Prostate gland (tissue), 2 donors: ENCODE measurements at regions of chr12 and their contacts with region 1.

Region 1: DNA sequence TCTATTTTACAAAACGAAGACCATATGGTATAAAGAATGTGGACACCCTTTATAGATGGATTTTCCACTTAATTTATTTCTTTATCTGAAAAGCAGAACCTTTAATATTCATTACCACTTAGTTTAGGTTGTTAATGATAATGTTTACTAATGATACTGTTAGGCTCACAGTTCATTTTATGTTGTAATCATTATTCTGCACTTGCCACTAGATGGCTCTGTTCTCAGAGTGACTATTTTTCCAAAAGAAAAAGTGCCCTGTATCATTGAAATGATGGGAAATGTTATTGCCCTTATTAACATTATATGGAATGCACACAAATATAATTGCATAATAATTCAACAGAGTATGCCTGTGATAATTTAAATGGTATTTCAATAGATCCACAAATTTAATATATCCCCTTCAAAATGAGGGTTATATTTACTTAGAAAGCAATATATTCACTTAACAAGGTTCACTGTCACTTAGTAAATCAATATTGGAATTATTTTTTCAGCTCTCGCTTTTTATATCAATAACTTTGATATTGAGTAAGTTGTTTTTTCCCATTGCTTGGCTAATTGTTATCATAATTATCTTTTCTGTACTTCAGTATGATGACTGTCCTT is 95.7 kb downstream of the PDE3A start:
- DNase-seq: no peak
- H3K4me3 ChIP-seq: no peak overlapping the region
- H3K27ac ChIP-seq: no peak overlapping the region
- H3K4me1 ChIP-seq: no peaks in the 10 kb centered on the region
- H3K27me3 ChIP-seq: no peaks in the 10 kb centered on the region
- CTCF ChIP-seq: peak in 3 of 4 experiments; percentile 38 to 57 (median 48)
- POLR2A ChIP-seq: no peak

Region 2: DNA sequence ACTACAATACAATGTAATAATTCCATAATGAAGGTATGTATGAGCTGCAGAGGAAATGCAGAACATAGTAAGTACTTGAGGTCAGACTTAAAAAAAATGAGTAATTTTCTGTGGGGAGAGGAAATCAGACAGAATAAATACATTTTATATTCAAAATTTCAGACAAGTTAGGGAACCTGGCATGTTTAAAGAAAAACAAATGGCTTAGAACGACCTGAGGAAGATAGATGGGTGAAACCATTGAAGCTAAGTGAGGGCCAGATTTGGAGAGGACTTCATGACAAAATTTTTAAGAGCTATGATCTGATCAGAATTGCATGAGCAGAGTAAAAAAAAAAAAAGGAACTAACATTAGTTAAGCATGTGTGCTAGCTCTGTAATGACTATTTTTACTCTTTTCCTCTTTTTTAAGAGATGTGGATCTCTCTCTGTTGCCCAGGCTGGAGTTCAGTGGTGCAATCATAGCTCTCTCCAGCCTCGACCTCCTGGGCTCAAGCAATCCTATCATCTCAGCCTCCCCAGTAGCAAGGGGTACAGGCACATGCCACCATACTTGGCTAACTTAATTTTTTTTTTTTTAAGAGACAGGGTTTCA is 253.3 kb before region 1 on chr12:
- intact Hi-C with region 1: no loop called
- DNase-seq: no peak
- H3K4me3 ChIP-seq: no peak overlapping the region
- H3K27ac ChIP-seq: peak overlapping the region in 1 of 2 donors; percentile 24
- H3K4me1 ChIP-seq: no peaks in the 10 kb centered on the region
- H3K27me3 ChIP-seq: no peaks in the 10 kb centered on the region
- CTCF ChIP-seq: no peak
- POLR2A ChIP-seq: no peak

Region 3: DNA sequence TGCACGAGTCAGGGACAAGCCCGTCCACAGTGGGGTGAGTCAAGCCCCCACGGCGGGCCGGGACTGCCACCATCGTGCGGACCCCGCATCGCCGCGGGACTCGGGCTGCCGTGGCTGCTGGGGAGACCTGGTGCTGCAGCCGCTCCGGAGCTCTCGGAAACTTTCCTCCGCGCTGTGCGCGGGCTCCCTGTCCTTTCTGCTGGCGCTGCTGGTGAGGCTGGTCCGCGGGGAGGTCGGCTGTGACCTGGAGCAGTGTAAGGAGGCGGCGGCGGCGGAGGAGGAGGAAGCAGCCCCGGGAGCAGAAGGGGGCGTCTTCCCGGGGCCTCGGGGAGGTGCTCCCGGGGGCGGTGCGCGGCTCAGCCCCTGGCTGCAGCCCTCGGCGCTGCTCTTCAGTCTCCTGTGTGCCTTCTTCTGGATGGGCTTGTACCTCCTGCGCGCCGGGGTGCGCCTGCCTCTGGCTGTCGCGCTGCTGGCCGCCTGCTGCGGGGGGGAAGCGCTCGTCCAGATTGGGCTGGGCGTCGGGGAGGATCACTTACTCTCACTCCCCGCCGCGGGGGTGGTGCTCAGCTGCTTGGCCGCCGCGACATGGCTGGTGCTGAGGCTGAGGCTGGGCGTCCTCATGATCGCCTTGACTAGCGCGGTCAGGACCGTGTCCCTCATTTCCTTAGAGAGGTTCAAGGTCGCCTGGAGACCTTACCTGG is 94.6 kb before region 1 on chr12:
- intact Hi-C with region 1: no loop called
- DNase-seq: peak; percentile 14
- H3K4me3 ChIP-seq: peak overlapping the region; percentile 37 to 44
- H3K27ac ChIP-seq: peak overlapping the region; percentile 72
- H3K4me1 ChIP-seq: no peaks in the 10 kb centered on the region
- H3K27me3 ChIP-seq: no peaks in the 10 kb centered on the region
- CTCF ChIP-seq: peak in 2 of 4 experiments; percentile 11 to 18
- POLR2A ChIP-seq: no peak

Region 4: GRCh38 chr12:20477672-20478071 is 13.7 kb after region 1 on chr12:
- intact Hi-C with region 1: no loop called
- DNase-seq: no peak
- H3K4me3 ChIP-seq: no peak overlapping the region
- H3K27ac ChIP-seq: no peak overlapping the region
- H3K4me1 ChIP-seq: no peaks in the 10 kb centered on the region
- H3K27me3 ChIP-seq: no peaks in the 10 kb centered on the region
- CTCF ChIP-seq: no peak
- POLR2A ChIP-seq: no peak

Region 5: DNA sequence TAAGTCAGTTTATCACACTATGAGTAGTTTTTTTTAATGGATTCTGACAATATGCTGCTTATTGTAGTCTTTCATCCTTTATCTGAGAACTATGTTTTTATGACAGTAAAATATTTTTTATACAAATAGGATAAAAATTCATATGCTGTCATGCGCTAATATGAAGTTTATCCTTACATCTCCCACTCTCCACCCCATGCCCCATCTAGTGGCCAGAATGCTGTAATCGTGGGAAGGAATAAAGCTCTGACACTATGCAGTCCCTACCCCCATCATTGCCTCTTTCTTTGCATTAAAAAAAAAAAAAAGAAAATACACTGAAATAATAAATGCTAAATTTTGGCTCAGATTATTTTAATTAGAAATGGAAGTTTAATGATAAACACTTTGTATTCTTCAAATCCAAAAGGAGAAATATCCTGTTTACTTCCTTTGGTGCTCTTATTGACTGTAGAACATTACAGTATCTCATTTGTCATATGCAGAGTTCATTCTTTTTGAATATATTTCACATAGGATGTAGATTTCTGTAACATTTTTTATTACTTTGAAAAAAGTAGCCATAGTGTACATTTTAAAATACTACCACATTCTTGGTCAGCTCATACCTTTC is 85.2 kb after region 1 on chr12:
- intact Hi-C with region 1: loop called (anchors 5 kb)
- DNase-seq: no peak
- H3K4me3 ChIP-seq: no peak overlapping the region
- H3K27ac ChIP-seq: no peak overlapping the region
- H3K4me1 ChIP-seq: no peaks in the 10 kb centered on the region
- H3K27me3 ChIP-seq: no peaks in the 10 kb centered on the region
- CTCF ChIP-seq: peak in 1 of 4 experiments; percentile 14
- POLR2A ChIP-seq: no peak

Region 6: DNA sequence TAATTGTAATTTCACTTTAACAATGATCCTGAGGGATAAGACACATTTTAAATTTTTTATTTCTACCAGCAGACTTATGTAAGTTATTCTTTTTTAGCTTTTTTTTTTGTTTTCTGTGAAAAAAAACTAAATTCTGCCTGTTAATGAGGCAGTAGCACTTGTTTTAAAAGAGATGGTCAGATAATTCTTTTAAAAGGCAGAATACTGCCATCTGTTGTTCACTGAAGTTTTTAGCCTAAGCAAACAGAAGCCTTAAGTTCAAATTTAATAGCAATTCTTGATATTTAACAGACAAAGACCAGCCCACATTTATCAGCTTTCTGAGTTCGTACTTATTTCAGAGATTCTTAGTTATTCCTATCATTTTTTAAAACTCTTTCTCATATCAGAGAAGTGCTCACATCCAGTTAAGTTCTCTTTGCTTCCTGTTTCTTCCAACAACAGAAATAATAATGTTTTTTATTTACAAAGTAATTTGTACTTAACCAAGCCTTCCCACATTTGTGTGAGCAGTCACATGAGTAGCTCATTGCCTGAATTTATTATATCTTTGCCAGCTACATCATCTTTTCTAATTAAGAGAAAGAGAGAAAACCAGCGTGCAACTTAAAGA is 137.8 kb after region 1 on chr12:
- intact Hi-C with region 1: loop called (anchors 10 kb)
- DNase-seq: no peak
- H3K4me3 ChIP-seq: no peak overlapping the region
- H3K27ac ChIP-seq: no peak overlapping the region
- H3K4me1 ChIP-seq: no peaks in the 10 kb centered on the region
- H3K27me3 ChIP-seq: no peaks in the 10 kb centered on the region
- CTCF ChIP-seq: peak in 3 of 4 experiments; percentile 36 to 54 (median 38)
- POLR2A ChIP-seq: no peak